ENCODE measurements at regions of chr13 and their contacts with region 1.

Region 1: GRCh38 chr13:49124693-49125304 is 95.3 kb upstream of the MLNR start:
- DNase-seq: no peak
- ATAC-seq: no peak
- H3K4me3 ChIP-seq: no peak overlapping the region
- H3K4me3 Mint-ChIP-seq: peak overlapping the region in 3 of 10 donors; percentile 4 to 25 (median 5)
- H3K27ac ChIP-seq: no peak overlapping the region
- H3K27ac Mint-ChIP-seq: peak overlapping the region in 8 of 9 donors; percentile 43 to 74 (median 56)
- H3K4me1 ChIP-seq: peaks cover 0 to 11% of the 10 kb centered on the region in 2 donors
- H3K4me1 Mint-ChIP-seq: peaks cover 14 to 58% (median 29%) of the 10 kb centered on the region in 7 donors
- H3K27me3 ChIP-seq: no peaks in the 10 kb centered on the region
- H3K27me3 Mint-ChIP-seq: no peaks in the 10 kb centered on the region

Region 2: GRCh38 chr13:49110122-49110912 is 14.5 kb before region 1 on chr13:
- CTCF ChIA-PET with region 1: interaction called, 3 read pairs
- POLR2A ChIA-PET with region 1: interaction called, 6 read pairs
- intact Hi-C with region 1: loop called in 1 of 2 experiments (anchors 2 kb)
- DNase-seq: peak; percentile 36 to 76 (median 68)
- ATAC-seq: peak; percentile 82
- H3K4me3 ChIP-seq: peak overlapping the region; percentile 75
- H3K4me3 Mint-ChIP-seq: peak overlapping the region; percentile 79 to 94 (median 90)
- H3K27ac ChIP-seq: peak overlapping the region; percentile 80
- H3K27ac Mint-ChIP-seq: peak overlapping the region; percentile 79 to 91 (median 90)
- H3K4me1 ChIP-seq: peaks cover 11 to 25% of the 10 kb centered on the region in 2 donors
- H3K4me1 Mint-ChIP-seq: peaks cover 16 to 48% (median 30%) of the 10 kb centered on the region in 7 donors
- H3K27me3 ChIP-seq: no peaks in the 10 kb centered on the region
- H3K27me3 Mint-ChIP-seq: no peaks in the 10 kb centered on the region

Region 3: GRCh38 chr13:49140910-49141611 is 16.3 kb after region 1 on chr13:
- CTCF ChIA-PET with region 1: no interaction called
- POLR2A ChIA-PET with region 1: no interaction called
- intact Hi-C with region 1: loop called in 1 of 2 experiments (anchors 2 kb)
- DNase-seq: no peak
- ATAC-seq: no peak
- H3K4me3 ChIP-seq: no peak overlapping the region
- H3K4me3 Mint-ChIP-seq: peak overlapping the region in 2 of 10 donors; percentile 9 to 33
- H3K27ac ChIP-seq: peak overlapping the region; percentile 3
- H3K27ac Mint-ChIP-seq: peak overlapping the region; percentile 10 to 92 (median 60)
- H3K4me1 ChIP-seq: peaks cover 0 to 12% of the 10 kb centered on the region in 2 donors
- H3K4me1 Mint-ChIP-seq: peaks cover 15 to 51% (median 39%) of the 10 kb centered on the region in 7 donors
- H3K27me3 ChIP-seq: no peaks in the 10 kb centered on the region
- H3K27me3 Mint-ChIP-seq: no peaks in the 10 kb centered on the region

Measured in naive thymus-derived CD4-positive, alpha-beta T cell (primary cell).